GM12878 (cell line): ENCODE measurements at regions of chr12 and their contacts with region 1.

Region 1: DNA sequence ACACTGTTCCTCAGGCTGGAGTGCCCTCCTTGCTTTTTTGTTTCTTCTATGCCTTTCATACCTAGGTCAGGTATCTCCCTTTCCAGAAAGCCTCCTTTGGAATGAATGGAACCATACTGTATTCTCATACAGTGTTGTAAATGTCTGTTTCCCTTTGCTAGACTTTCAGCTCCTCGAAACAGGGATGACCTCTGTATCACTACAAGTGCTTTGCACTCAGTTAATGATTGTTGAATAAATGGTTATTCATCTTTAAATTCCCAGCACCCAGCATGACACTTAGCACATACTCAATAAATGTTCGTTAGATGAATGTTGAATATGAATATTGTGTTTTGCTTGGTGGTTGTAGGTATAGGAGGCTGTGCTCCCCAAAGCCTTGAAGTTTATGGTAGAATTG is 5.9 kb upstream of the TULP3 start:
- DNase-seq: no peak
- ATAC-seq: peak; percentile 21
- H3K4me3 ChIP-seq: no peak overlapping the region
- H3K27ac ChIP-seq: no peak overlapping the region
- H3K4me1 ChIP-seq: no peaks in the 10 kb centered on the region
- H3K27me3 ChIP-seq: no peaks in the 10 kb centered on the region
- CTCF ChIP-seq: no peak
- EP300 ChIP-seq: no peak
- POLR2A ChIP-seq: no peak
- RAD21 ChIP-seq: no peak

Region 2: GRCh38 chr12:2739817-2740641 is 144.8 kb before region 1 on chr12:
- CTCF ChIA-PET with region 1: no interaction called
- POLR2A ChIA-PET with region 1: no interaction called
- RAD21 ChIA-PET with region 1: no interaction called
- SMC1A ChIA-PET with region 1: no interaction called
- in situ Hi-C with region 1: no loop called
- intact Hi-C with region 1: no loop called
- DNase-seq: no peak
- ATAC-seq: no peak
- H3K4me3 ChIP-seq: no peak overlapping the region
- H3K27ac ChIP-seq: no peak overlapping the region
- H3K4me1 ChIP-seq: no peaks in the 10 kb centered on the region
- H3K27me3 ChIP-seq: peaks cover 0 to 2% of the 10 kb centered on the region in 2 experiments; a peak in 2 of 4 replicates
- CTCF ChIP-seq: peak in 2 of 3 experiments; percentile 28 to 40; a peak in 4 of 6 replicates
- EP300 ChIP-seq: no peak
- POLR2A ChIP-seq: no peak
- RAD21 ChIP-seq: peak; percentile 40

Region 3: GRCh38 chr12:3034067-3034750 is 149.4 kb after region 1 on chr12:
- CTCF ChIA-PET with region 1: interaction called, 10 read pairs
- POLR2A ChIA-PET with region 1: no interaction called
- RAD21 ChIA-PET with region 1: interaction called, 7 read pairs
- SMC1A ChIA-PET with region 1: no interaction called
- in situ Hi-C with region 1: no loop called
- intact Hi-C with region 1: no loop called
- DNase-seq: no peak
- ATAC-seq: peak; percentile 99
- H3K4me3 ChIP-seq: no peak overlapping the region
- H3K27ac ChIP-seq: no peak overlapping the region
- H3K4me1 ChIP-seq: no peaks in the 10 kb centered on the region
- H3K27me3 ChIP-seq: no peaks in the 10 kb centered on the region; a peak in 1 of 4 replicates
- CTCF ChIP-seq: peak; percentile 73 to 83 (median 76)
- EP300 ChIP-seq: no peak
- POLR2A ChIP-seq: no peak
- RAD21 ChIP-seq: peak; percentile 53; the same call in 1 of the 2 replicates

Region 4: DNA sequence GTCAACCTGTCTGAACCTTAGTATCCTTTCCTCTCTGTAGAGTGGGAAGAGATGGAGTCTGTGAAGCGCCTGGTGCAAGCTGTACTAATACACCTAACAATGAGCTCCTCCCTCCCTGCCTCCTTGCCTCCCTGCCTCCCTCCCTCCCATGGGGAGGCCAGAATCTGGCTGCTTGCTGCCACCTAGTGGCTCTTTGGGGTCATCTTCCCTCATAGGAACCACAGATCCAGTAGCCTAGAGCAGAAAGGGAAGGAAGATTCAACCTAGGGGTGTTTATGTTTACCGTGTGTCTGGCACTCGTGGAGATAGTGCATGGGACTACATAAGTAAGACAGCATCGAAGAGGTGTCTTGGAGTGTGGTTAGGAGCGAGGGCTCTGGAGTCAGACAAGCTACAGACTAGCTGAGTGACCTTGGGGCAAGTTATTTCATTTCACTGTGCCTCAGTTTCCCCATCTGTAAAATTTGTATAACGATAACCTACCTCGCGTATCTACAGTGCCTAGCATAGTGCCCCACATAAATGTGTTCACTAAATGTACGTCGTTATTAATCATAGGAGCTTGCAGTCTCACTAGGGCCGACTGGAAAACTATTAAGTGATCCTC is 156.9 kb after region 1 on chr12:
- CTCF ChIA-PET with region 1: interaction called, 3 read pairs
- POLR2A ChIA-PET with region 1: no interaction called
- RAD21 ChIA-PET with region 1: interaction called, 6 read pairs
- SMC1A ChIA-PET with region 1: interaction called, 4 read pairs
- in situ Hi-C with region 1: no loop called
- intact Hi-C with region 1: loop called (anchors 1 kb)
- DNase-seq: peak; percentile 15
- ATAC-seq: peak; percentile 98
- H3K4me3 ChIP-seq: no peak overlapping the region
- H3K27ac ChIP-seq: no peak overlapping the region
- H3K4me1 ChIP-seq: no peaks in the 10 kb centered on the region
- H3K27me3 ChIP-seq: peaks cover 0 to 2% of the 10 kb centered on the region in 2 experiments; a peak in 1 of 4 replicates
- CTCF ChIP-seq: peak; percentile 59 to 75 (median 65)
- EP300 ChIP-seq: no peak
- POLR2A ChIP-seq: no peak
- RAD21 ChIP-seq: peak; percentile 77

Region 5: DNA sequence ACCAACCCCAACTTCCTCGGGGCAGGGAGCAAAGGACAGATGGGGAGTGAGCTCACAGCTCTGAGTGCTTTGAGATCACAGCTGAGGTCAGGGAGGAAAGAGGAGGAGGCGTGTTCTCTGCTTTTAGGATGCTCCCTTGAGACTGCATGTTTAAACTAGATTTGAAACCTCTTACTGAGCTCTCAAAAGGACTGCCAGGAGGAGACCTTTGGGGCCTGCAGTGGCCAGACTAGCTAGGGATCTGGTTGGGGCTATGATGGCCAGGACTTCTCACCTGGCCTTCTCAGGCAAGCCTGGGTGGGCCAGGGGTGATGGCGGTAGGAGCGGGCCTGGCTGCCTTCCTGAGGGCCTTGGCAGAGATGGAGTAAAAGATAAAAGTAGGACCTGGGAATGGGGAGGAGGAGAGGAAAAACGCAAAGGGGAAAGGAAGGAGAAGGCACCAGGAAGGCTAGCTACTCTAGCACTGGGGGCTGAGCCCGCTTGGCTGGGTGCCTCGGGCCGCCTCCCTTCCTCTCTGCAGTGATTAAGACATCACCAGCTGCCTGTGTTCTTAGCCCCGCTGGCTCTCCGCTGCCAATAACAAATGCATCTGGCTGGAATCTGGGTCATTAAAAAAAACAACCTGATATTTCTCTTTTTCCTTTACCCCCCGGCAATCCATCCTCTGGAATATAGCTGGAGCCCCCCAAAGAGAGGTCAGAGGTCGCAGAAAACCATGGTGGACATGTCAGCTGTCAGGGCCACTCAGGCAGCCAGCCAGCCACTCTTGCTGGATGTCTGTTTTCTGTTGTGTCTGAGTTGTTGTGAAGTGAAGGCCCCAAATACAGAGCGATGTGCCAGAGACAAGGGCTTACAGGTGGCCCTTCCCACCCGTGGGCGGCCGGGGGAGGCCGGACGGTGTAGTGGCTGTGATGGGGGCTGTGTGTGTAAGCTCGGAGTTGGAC is 333.7 kb after region 1 on chr12:
- CTCF ChIA-PET with region 1: no interaction called
- POLR2A ChIA-PET with region 1: no interaction called
- RAD21 ChIA-PET with region 1: no interaction called
- SMC1A ChIA-PET with region 1: no interaction called
- in situ Hi-C with region 1: no loop called
- intact Hi-C with region 1: no loop called
- DNase-seq: no peak
- ATAC-seq: no peak
- H3K4me3 ChIP-seq: no peak overlapping the region
- H3K27ac ChIP-seq: no peak overlapping the region
- H3K4me1 ChIP-seq: peaks cover 12% of the 10 kb centered on the region
- H3K27me3 ChIP-seq: peaks cover 0 to 3% of the 10 kb centered on the region in 2 experiments; a peak in 2 of 4 replicates
- CTCF ChIP-seq: no peak
- EP300 ChIP-seq: no peak
- POLR2A ChIP-seq: no peak
- RAD21 ChIP-seq: no peak